Dendritic cell treated with granulocyte-macrophage colony-stimulating factor and Interleukin-4, amounts not matched to agents 40 ng/mL and 50 ng/mL, for 4 days (primary cell): ENCODE measurements at regions of chr6 and their contacts with region 1.

Region 1: GRCh38 chr6:16128759-16129622 is at the start of gene MYLIP:
- H3K4me3 Mint-ChIP-seq: peak within 1 kb of the TSS; percentile 92
- H3K27ac Mint-ChIP-seq: peak within 1 kb of the TSS; percentile 90
- H3K4me1 Mint-ChIP-seq: peaks cover 14% of the 10 kb centered on the region
- H3K27me3 Mint-ChIP-seq: peaks cover 6% of the 10 kb centered on the region

Region 2: DNA sequence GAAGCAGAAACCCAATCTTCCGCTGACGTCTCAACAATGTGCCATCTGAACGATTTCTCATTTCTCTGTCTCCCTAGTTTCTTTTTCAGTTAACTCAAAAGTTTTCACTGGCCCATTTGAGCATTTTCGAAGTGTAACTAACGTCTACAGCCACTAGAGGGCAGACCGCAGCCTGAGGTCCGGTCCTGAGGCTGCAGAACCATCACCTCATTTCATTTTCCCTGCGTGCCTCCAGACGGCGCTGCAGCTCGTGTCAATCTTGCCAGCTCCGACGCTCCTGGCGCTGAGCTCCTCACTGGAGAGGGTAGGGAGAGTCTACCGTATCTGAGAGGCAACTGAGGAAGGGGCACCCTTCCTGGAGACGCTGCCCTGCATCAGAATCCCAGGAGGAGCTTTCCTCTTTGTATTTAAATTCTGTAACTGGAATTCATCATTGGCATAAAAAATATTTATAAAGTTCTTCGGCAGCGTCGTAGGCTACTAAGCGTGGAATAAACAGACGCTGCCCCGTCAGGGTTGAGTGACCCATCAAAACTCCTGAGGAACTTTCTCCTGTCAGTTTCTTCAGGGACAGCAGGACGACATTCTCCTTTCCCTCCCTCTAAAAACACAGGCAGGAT is 437.6 kb before region 1 on chr6:
- intact Hi-C with region 1: loop called (anchors 2 kb)
- H3K4me3 Mint-ChIP-seq: no peak overlapping the region
- H3K27ac Mint-ChIP-seq: peak overlapping the region; percentile 18
- H3K4me1 Mint-ChIP-seq: peaks cover 23% of the 10 kb centered on the region
- H3K27me3 Mint-ChIP-seq: peaks cover 1% of the 10 kb centered on the region

Region 3: DNA sequence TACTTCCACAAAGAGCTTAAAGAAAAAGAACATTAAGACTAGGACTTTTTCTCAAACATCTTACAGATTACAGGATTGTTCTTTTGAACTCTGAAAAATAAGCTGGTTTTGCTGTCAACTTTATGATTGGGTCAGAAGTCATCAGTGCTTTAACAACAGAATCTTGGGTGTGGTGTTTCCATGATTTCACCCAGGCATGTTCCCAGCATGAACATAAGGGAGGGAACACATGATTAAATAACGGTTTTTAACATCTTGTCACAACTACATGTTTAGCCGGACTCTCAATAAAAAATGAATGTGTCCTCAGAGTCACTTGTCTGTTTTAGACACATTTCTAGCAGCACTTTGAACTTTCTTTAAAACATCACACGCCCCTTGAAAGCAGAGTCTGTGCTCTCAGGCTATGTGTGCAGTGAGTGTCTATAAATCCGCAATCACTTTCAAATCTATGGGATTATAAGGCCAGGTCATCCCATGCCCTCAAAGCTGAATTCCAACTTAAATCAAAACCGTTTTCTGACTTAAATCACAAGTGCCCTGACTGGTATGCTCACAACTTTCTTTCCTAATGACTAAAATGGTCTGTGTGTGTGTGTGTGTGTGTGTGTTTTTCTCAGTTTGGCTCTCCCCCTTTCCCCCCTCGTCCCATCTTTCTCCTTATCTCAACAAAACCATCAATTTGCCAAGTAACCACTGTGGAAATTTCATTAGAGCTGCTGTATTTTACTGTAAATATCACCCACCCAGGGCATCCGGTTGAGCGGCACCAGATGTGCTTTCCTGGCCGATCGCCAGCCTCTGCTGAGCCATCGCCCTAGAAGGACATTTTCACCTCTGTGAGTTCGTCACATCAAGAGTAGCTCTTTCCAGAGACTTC is 249.4 kb before region 1 on chr6:
- intact Hi-C with region 1: loop called (anchors 5 kb)
- H3K4me3 Mint-ChIP-seq: no peak overlapping the region
- H3K27ac Mint-ChIP-seq: peak overlapping the region; percentile 91
- H3K4me1 Mint-ChIP-seq: peaks cover 66% of the 10 kb centered on the region
- H3K27me3 Mint-ChIP-seq: no peaks in the 10 kb centered on the region

Region 4: DNA sequence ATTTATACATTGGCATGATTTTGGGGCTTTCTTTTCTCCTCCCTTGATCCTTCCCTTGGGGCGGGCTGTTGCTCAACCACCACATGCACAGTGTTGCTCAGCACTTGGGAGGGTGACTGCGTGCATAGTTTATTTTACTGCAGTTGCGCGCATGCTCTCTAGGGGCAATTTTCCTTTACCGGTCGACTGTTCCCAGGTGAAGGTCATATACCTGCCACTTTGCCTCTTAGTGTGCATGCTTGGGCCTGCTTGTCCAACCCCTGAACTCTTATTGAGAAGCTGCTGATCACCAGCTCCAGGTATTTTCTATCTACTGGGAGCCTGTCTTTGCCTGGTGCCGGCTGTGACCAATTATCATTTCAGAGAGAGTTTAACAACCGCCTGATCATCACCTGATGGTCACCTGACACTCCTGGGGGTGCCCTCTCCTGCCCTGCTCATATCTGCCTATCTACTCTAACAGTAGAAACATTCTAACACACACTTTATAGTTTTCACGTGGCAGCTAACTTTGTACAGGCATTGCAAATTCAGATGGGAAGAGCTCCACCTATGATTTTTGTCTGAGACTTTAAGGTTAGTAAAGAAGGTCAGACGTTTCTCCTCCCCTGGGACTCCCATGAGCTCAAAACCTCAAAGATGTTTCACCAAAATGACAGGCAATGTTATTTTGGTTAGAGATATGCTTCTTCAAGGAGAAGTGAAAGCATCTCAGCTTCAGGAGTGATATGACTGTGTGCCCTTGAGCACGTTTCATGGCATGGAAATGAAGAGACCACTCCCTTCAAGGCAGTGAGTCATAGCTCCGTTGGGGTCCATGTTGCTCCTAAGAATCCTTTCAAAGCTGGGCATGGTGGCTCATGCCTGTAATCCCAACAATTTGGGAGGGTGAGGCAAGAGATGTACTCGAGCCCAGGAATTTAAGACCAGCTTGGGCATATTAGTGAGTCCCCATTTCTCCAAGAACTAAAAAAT is 227.6 kb before region 1 on chr6:
- intact Hi-C with region 1: loop called (anchors 1 kb)
- H3K4me3 Mint-ChIP-seq: peak overlapping the region; percentile 37
- H3K27ac Mint-ChIP-seq: peak overlapping the region; percentile 92
- H3K4me1 Mint-ChIP-seq: peaks cover 69% of the 10 kb centered on the region
- H3K27me3 Mint-ChIP-seq: no peaks in the 10 kb centered on the region

Region 5: DNA sequence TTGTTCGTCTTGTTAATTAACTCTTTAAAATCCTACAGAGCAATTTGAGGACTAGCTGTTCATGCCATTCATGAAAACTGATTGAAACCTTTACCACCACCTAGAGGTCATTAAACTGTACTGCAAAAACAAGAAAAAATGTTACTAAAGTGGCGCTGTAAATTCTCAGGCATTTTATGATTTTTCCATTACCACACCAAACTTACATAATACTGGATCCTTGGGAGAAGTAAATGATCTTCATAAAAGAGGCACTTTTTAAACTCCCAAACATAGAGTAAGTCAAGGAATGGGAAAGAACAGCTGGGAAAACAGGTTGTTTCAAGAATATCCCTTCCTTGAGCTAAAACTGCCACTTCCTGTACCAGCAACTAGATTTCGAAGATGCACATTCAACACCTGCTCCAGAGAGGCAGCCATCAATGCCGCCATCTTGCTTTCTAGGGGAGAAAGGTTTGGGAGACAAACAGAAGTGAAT is 54.2 kb after region 1 on chr6:
- intact Hi-C with region 1: loop called (anchors 5 kb)
- H3K4me3 Mint-ChIP-seq: no peak overlapping the region
- H3K27ac Mint-ChIP-seq: no peak overlapping the region
- H3K4me1 Mint-ChIP-seq: peaks cover 9% of the 10 kb centered on the region
- H3K27me3 Mint-ChIP-seq: peaks cover 5% of the 10 kb centered on the region

Region 6: GRCh38 chr6:16206595-16207037 is 77.6 kb after region 1 on chr6:
- intact Hi-C with region 1: no loop called
- H3K4me3 Mint-ChIP-seq: no peak overlapping the region
- H3K27ac Mint-ChIP-seq: no peak overlapping the region
- H3K4me1 Mint-ChIP-seq: no peaks in the 10 kb centered on the region
- H3K27me3 Mint-ChIP-seq: peaks cover 20% of the 10 kb centered on the region

Region 7: DNA sequence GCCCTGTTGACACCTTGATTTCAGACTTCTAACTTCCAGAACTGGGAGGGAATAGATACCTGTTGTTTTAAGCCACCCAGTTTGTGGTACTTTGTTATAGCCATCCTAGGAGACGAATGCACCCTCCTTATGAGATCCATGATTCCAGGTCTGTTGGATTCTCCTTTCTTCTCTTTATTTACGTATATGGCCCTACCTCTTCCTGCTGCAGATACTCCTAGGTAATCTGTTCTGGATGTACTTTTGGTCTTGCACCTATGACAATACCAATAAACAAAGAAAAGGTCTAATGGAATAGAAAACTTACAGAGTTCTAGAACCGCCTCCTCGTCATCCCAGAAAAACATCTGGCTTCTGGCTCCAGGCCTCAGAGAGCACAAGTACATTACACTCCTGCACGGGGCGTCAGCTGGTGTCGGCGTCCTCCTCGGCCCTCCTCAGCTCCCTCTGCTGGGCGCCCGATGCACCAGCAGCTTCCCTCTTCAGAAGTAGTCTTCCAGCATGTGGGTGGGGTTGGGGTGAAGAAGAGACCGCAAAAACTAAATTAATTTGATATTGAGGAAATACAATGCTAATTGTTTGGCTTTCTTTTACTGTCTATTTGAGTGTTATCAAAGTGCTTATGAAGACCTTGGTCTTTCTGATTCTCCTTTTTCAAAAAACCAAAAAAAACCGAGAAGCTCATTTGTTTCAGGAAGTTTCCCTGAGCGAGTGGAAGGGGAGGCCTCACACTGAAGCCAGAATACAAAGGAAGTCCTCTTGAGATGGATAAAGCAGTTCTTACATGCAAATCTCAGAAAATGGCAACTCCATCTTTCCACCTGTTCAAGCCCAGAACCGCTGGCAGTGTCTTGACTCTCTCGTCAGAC is 641.9 kb after region 1 on chr6:
- intact Hi-C with region 1: no loop called
- H3K4me3 Mint-ChIP-seq: peak overlapping the region; percentile 35
- H3K27ac Mint-ChIP-seq: peak overlapping the region; percentile 77
- H3K4me1 Mint-ChIP-seq: peaks cover 63% of the 10 kb centered on the region
- H3K27me3 Mint-ChIP-seq: no peaks in the 10 kb centered on the region